ENCODE measurements at regions of chr14 and their contacts with region 1.

Region 1: GRCh38 chr14:55212634-55213033 is 21.2 kb upstream of the DLGAP5 start:
- DNase-seq: no peak
- H3K4me3 ChIP-seq: no peak overlapping the region
- H3K27ac ChIP-seq: no peak overlapping the region
- H3K4me1 ChIP-seq: no peaks in the 10 kb centered on the region
- H3K27me3 ChIP-seq: no peaks in the 10 kb centered on the region
- CTCF ChIP-seq: no peak

Region 2: GRCh38 chr14:55348766-55349453 is 136.3 kb after region 1 on chr14:
- intact Hi-C with region 1: no loop called
- DNase-seq: no peak
- H3K4me3 ChIP-seq: no peak overlapping the region
- H3K27ac ChIP-seq: no peak overlapping the region
- H3K4me1 ChIP-seq: peaks cover 44% of the 10 kb centered on the region
- H3K27me3 ChIP-seq: no peaks in the 10 kb centered on the region
- CTCF ChIP-seq: no peak

Region 3: DNA sequence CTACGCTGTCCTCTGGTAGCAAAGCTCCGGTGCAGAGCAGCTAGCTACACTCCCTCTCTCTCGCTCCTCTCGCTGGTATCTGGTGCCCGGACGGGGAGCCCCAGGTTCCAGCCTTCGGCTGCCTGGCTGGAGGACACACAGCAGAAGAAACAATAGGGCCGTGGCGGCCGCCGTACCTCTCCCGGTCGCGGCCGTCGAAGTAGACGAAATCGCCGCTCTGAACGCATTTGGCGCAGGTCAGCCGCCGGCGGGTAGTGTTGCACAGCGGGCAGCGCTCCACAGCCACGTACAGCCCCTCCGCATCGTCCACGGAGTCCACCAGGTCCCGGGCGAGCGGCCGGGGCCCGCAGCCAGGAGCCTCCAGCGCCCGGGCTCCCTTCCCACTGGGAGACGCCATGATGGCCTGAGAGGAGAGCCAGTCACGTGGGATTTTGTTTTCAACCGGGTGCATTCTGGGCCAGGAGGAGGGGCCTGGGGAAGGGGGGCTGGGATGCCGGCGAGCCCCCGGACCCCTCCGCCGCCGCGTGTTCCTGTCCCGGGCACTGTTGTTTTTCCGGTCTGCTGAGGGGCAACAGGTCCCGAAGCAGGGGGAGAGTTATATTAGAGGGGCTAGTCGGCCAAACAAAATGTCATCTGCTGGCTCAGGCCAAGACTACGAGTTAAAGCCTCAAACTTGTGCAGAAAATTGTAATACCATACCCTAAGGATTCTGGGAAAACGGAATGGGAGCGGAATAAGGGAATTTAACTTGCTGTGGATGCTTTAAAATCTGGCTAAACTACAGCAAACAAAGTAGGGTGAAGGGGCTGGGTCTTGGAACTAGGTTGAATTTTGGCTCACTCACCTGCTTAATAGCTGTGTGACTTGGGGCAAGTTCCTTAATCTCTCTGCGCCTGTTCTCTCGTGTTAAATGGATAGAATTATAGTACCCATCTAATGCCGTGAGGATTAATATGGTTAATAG is 199.1 kb after region 1 on chr14 and contains the start of gene ATG14:
- intact Hi-C with region 1: loop called (anchors 10 kb)
- DNase-seq: peak; percentile 85
- H3K4me3 ChIP-seq: peak within 1 kb of the TSS; percentile 82
- H3K27ac ChIP-seq: peak within 1 kb of the TSS; percentile 95
- H3K4me1 ChIP-seq: peaks cover 35% of the 10 kb centered on the region
- H3K27me3 ChIP-seq: no peaks in the 10 kb centered on the region
- CTCF ChIP-seq: no peak
- total RNA-seq, gene ATG14: 13.2 TPM

Measured in left ventricle myocardium inferior (tissue), 1 donor.